Thyroid gland (tissue), 4 donors: ENCODE measurements at regions of chr7 and their contacts with region 1.

Region 1: DNA sequence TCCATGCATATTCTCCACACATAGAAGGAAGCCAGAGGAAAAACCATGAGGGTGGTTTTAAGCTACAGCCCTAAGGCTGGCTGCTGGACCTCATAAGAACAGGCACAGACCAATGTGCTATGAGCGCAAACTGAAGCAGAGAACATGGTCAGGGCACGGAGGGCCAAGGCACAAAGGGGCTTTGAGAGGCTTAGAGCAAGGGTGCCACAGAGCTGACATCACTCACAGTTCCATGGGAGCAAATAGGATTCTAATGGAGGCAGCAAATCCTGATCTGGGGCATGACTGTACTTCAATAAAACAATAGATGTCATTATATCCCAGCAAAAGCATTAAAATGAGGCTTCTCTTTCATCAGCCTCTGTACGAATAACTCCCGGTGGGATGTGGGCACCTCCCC is 162.4 kb downstream of the COBL start:
- DNase-seq: no peak
- H3K4me3 ChIP-seq: no peak overlapping the region
- H3K27ac ChIP-seq: no peak overlapping the region
- H3K4me1 ChIP-seq: no peaks in the 10 kb centered on the region
- H3K27me3 ChIP-seq: no peaks in the 10 kb centered on the region
- CTCF ChIP-seq: no peak
- POLR2A ChIP-seq: no peak

Region 2: DNA sequence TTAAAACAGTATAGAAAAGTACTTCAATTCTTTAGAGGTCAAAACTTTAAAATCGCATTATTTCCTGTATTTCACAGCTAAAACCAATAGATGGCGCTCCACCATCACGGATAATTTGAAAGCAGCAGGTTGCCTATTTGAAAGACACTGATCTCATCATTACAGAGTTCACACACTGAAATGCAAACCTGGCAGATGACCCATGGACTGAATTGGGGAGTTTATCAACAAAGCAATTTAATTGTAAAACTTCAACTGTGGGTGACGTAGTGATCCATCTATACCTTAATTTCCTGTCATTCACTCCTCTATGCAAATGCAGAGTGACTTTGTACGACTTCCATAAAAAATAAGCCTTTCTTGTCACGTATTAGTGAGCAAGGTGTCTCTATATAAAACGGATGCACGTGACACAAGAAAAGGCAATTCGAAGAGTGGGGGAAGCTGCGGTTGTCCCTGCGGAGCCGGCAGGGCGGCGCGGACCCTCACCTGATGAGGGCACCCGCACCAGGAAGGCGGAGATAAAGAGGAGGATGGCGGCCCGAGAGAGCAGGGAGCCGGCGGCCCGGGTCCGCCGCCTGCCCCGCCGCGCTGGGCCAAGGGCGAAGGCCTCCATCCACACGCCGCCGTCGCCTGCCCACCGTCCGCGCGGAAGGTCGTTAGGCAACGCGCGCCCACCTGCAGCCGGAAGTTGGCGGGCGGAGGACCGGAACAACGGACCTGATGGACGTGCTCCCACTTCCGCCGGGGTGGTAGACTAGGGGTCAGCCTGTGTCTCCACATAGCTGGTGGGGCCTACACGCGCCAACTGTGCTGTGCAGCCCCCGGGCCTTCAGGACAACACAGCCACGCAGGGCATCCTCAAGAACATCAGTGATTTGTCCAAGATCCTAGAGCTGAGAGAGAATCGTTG is 1061.4 kb before region 1 on chr7 and contains the start of gene ZPBP:
- intact Hi-C with region 1: loop called (anchors 10 kb)
- DNase-seq: peak; percentile 37 to 38
- H3K4me3 ChIP-seq: peak within 1 kb of the TSS in 2 of 3 donors; percentile 32 to 35
- H3K27ac ChIP-seq: no peak within 1 kb of the TSS
- H3K4me1 ChIP-seq: peaks cover 0 to 5% of the 10 kb centered on the region in 2 donors
- H3K27me3 ChIP-seq: no peaks in the 10 kb centered on the region
- CTCF ChIP-seq: peak; percentile 26 to 82 (median 68)
- POLR2A ChIP-seq: no peak
- total RNA-seq, gene ZPBP: 0.71 to 1.5 (median 0.89) TPM in 3 of 4 donors, not detected in the other

Region 3: DNA sequence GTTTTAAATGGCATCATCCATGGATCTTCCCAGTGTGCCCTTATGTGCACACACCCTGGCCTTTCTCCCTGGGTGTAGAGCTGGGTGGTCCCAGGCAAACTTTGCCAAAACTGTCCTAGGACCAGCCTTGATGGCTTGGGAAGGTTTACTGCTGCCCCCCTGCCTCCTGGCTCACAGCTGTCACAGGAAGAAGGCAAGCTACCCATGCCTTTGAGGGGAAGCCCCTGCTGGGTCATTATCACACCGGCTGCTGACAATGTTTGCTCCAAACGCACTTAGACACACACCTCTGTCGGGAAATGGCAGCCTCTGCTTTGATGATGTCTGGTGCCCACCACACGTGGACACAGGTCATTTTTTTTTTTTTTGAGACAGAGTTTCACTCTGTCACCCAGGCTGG is 678.9 kb before region 1 on chr7:
- intact Hi-C with region 1: loop called (anchors 10 kb)
- DNase-seq: no peak
- H3K4me3 ChIP-seq: no peak overlapping the region
- H3K27ac ChIP-seq: no peak overlapping the region
- H3K4me1 ChIP-seq: no peaks in the 10 kb centered on the region
- H3K27me3 ChIP-seq: no peaks in the 10 kb centered on the region
- CTCF ChIP-seq: no peak
- POLR2A ChIP-seq: no peak